Activated naive CD4-positive, alpha-beta T cell treated with anti-CD3 and anti-CD28 coated beads, Interleukin-2, amount 10 ng/mL, durations not matched to agents 7 days and 5 days (primary cell): ENCODE measurements at regions of chr22 and their contacts with region 1.

Region 1: DNA sequence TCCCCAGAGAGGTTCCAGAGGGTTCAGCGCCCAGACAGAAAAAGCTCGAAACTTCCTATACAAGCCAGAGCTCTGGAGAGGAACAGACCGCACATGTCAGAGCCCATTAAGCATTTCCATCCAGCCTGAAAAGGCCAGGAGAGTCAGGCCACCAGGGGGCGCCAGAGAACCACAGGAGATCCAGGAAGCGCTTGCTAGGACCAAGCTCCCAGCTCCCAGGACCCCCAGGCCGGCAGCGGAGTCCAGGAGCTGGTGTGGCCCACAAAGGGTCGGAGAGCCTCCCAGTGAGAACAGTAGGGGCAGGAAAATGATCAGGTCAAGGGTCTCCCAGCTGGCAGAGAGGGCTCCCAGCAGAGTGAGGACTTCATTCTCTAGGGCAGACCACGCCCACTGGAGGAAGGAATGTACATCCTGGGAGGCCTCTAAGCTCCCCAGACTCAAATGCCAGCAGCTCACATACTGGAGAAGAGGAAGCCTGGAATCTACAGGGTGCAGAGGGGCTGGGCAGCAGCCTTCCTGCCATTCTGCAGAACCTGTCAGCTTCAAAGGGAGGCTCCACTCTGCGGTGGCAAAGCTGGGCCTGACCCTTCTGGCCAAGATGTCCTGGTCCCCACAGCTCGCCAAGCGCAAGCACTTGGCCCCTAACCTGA is 2.1 kb upstream of the MEI1 start:
- DNase-seq: peak; percentile 95
- H3K4me3 Mint-ChIP-seq: peak overlapping the region; percentile 18
- H3K27ac Mint-ChIP-seq: peak overlapping the region; percentile 57
- H3K4me1 Mint-ChIP-seq: peaks cover 11% of the 10 kb centered on the region
- H3K27me3 Mint-ChIP-seq: peaks cover 18% of the 10 kb centered on the region

Region 2: DNA sequence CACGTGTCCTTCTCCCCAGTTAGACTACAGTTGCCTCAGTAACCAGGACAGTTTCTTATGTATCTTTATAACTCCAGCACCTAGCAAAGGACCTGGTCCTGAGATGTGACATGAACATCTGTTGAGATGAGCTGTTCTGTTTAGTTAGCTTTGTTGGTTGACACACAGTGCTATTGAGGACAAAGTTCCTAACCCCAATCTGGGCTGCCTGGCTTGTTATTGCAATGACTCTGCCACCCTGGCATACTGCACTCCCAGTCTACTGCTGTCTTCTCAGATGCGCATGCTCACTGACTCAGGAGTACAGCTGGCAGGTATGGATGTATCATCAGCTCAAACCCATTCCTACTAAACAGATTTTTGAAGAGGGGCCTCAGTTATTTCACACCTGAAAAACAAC is 83.8 kb before region 1 on chr22:
- CTCF ChIA-PET with region 1: no interaction called
- DNase-seq: no peak
- H3K4me3 Mint-ChIP-seq: no peak overlapping the region
- H3K27ac Mint-ChIP-seq: no peak overlapping the region
- H3K4me1 Mint-ChIP-seq: peaks cover 9% of the 10 kb centered on the region
- H3K27me3 Mint-ChIP-seq: no peaks in the 10 kb centered on the region

Region 3: DNA sequence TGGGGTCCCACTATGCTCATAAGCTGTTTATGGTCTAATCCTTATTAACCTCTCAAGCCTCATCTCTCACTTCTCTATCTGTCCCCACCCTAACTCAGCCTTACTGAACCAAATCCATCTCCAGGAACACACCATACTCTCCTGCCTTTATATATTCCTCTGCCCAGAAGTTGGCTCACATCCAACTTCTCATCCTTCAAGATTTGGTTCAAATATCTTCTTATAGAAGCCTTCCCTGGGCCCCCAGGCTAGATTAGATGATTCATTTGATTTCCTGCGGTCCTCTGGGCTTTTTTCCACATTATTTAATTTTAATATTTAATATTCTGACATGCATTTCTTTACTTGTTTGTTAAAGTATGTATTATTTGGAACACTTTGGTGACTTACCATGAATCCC is 25.2 kb after region 1 on chr22:
- CTCF ChIA-PET with region 1: interaction called, 13 read pairs
- DNase-seq: no peak
- H3K4me3 Mint-ChIP-seq: no peak overlapping the region
- H3K27ac Mint-ChIP-seq: no peak overlapping the region
- H3K4me1 Mint-ChIP-seq: no peaks in the 10 kb centered on the region
- H3K27me3 Mint-ChIP-seq: peaks cover 30% of the 10 kb centered on the region

Region 4: GRCh38 chr22:41780746-41781505 is 83.7 kb after region 1 on chr22:
- CTCF ChIA-PET with region 1: interaction called, 15 read pairs
- DNase-seq: peak; percentile 98
- H3K4me3 Mint-ChIP-seq: peak overlapping the region; percentile 82
- H3K27ac Mint-ChIP-seq: peak overlapping the region; percentile 97
- H3K4me1 Mint-ChIP-seq: peaks cover 58% of the 10 kb centered on the region
- H3K27me3 Mint-ChIP-seq: peaks cover 6% of the 10 kb centered on the region

Region 5: DNA sequence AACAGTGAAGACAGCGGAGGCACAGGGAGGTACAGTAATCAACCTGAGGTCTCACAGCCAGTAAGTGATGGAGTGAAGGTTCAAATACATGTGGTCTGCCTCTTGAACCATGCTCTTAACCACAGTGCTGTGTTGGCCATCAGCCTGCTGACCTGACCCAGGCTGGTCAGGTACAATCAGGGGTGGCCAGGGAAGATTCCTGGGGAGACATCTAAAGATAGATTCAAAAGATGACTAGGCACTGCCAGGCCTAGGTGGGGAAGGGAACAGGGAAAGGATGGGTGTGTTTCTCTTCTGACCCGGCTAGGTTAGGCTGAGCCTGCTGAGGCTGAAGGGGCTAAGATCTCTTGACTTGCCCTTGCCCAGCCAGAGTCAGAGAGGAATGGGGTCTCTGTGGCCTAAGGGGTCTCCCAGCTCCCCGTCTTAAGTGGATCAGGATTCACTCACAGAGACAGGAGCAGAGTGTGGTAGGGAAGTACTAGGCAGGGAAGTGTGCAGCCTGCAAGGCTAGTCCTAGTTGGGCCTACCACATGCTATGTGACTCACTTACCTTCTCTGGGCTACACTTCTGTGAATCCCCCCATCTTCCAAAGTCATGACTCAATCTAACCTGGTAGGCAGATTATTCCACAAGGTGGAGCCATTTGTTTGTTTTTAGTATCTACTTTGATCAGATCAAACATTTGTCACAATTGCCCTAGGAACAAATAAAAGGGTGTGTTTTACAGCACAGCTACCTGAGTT is 125.2 kb after region 1 on chr22:
- CTCF ChIA-PET with region 1: interaction called, 12 read pairs
- DNase-seq: peak; percentile 29
- H3K4me3 Mint-ChIP-seq: no peak overlapping the region
- H3K27ac Mint-ChIP-seq: peak overlapping the region; percentile 57
- H3K4me1 Mint-ChIP-seq: peaks cover 6% of the 10 kb centered on the region
- H3K27me3 Mint-ChIP-seq: no peaks in the 10 kb centered on the region

Region 6: DNA sequence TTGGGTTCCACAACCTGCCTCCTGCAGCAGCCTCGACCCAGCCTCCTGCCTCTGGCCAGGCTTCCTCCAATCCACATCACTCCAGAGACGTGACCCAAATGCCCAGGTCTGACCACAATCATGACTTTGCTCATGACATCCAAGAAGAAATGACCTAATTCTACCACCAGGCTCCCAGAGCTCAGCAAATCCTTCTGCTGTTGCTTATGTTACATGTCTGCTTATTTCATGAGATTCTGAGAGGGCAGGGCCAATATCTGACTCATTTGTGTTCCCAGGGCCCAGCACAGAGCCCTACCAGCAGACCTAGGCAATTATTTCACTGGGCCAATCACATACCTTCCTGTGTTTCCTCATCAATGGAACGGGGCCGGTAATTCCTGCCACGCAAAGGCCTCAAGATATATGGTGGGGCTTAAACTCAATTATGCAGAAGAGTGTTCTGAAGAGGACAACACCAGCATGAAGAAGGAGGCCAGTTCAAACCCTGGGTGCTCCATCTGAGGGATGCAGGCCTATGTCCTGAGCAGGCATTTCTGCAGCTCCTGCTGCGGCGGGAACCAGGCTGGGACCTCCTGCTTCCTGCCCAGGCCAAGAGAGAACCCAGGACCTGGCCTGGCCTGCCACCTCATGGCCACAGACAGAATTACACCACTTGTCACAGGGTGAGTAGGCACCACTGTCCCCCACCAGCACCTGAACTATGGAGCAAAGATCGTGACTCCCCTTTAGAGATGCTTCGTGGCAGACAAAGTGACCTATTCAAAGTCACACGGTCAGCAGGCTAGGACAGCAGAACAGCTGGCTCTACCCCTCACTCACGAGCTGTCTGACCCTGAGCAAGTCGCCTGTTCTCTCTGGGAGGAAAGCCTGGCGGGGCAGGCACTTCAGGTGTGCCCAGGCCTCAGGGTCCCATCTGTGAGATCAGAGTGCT is 243.8 kb after region 1 on chr22:
- CTCF ChIA-PET with region 1: interaction called, 45 read pairs
- DNase-seq: peak; percentile 93
- H3K4me3 Mint-ChIP-seq: peak overlapping the region; percentile 49
- H3K27ac Mint-ChIP-seq: peak overlapping the region; percentile 100
- H3K4me1 Mint-ChIP-seq: peaks cover 67% of the 10 kb centered on the region
- H3K27me3 Mint-ChIP-seq: no peaks in the 10 kb centered on the region

Region 7: GRCh38 chr22:41951898-41952474 is 254.7 kb after region 1 on chr22 and contains the start of gene SMIM45:
- CTCF ChIA-PET with region 1: interaction called, 20 read pairs
- DNase-seq: no peak
- H3K4me3 Mint-ChIP-seq: no peak within 1 kb of the TSS
- H3K27ac Mint-ChIP-seq: no peak within 1 kb of the TSS
- H3K4me1 Mint-ChIP-seq: peaks cover 19% of the 10 kb centered on the region
- H3K27me3 Mint-ChIP-seq: peaks cover 20% of the 10 kb centered on the region